Posterior vena cava (tissue), 2 donors: ENCODE measurements at regions of chr9 and their contacts with region 1.

Region 1: GRCh38 chr9:21789541-21790037 is 12.8 kb upstream of the MTAP start:
- DNase-seq: no peak

Region 2: GRCh38 chr9:21326526-21327139 is 463.0 kb before region 1 on chr9:
- intact Hi-C with region 1: loop called (anchors 10 kb)
- DNase-seq: no peak

Region 3: DNA sequence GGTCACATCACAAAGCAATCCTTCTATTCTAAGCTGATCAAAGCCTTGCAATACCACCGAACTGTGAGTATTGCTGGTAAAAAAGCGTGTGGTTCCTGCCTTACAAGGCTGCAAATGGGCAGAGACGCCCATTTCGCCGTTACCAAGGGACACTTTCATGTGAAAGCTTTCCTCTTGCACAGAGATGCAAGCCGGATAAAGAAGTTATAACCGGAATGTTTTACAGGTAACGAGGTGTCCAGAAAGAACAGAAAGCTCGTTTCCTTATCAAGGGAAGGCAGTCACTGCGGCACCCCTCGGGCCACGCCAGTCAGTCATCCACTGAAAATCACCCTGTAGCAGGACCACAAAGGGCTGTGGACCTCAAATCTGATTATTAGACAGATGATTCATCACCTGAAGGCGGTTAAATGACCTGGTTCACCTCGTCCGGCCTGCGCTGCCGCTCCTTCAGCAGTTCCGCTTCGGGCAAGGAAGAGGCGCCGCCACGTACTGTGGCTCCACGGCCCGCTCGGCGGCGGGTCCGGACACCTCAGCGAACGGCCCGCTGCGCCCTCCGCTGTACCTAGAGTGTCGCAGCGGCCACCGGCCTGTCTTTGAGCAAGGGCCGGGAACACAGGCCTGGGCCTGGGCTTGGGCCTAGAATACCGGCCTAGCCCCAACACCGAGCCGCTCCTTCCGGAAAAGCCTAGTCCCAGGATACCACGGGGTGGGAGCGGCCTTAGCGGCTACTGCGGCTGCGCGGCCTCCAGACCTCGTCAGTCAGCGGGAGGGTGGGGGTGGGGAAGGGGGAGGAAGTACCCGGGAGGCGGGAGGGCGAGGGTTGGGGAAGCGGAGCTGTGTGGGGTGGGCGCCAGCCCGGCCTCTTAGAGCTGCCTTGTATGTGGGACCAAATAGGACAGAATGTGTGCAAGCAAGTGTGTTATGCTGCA is 454.6 kb before region 1 on chr9 and contains the start of gene KLHL9:
- intact Hi-C with region 1: loop called in 1 of 2 experiments (anchors 10 kb)
- DNase-seq: peak; percentile 97
- total RNA-seq, gene KLHL9: 21.9 to 24.2 TPM